Breast epithelium (tissue), 4 donors: ENCODE measurements at regions of chr15 and their contacts with region 1.

Region 1: DNA sequence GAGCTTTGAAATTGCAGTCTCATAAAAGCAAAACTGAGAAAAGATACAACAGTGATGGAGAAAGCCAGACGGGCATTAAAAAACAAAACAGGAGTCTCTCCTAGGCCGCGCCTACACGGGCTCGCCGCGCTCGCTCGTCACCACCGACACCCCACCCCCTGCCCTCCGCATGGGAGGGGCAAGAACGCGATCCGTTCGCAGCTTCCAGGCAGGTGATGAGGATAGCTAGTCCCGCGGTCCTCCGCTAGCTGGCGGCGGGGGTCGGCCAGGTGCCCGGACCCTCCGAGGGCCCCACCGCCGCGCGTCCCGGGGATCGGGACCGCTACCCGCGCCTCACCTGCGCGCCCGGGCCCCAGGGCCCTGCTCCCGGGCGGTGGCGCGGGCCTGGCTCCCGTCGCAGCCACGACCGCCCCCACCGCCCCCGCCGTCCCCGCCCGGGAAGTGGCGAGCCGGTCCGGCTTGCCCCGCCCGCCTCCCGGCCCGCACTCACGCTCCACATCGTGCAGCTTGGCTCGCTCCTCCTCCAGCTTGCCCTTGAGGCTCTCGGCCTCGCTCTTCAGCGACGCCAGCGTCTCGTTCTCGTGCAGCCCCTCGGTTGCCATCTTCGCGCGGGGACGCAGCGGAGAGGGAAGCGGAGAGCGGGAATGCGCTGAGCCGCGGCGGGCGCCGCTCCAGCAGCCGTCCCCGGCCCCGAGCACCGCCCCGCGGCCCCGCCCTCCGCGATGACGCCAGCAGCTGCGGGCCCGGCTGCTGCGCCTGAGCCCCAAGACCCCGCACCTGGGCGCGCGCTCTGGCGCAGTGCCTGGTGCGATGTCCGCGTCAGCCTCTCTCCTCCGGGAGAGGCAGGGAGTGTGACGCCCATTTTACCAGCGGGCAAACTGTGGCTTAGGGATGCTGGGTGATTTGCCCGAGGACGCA is 11.7 kb downstream of the GNB5 start:
- DNase-seq: peak; percentile 81 to 89
- H3K4me3 ChIP-seq: peak overlapping the region; percentile 75 to 96 (median 79)
- H3K27ac ChIP-seq: peak overlapping the region; percentile 97 to 100
- H3K4me1 ChIP-seq: peaks cover 3 to 5% of the 10 kb centered on the region in 2 donors
- H3K27me3 ChIP-seq: no peaks in the 10 kb centered on the region
- CTCF ChIP-seq: no peak
- POLR2A ChIP-seq: peak; percentile 54

Region 2: GRCh38 chr15:52246686-52247431 is 67.3 kb after region 1 on chr15:
- intact Hi-C with region 1: loop called (anchors 2 kb)
- DNase-seq: no peak
- H3K4me3 ChIP-seq: no peak overlapping the region
- H3K27ac ChIP-seq: no peak overlapping the region
- H3K4me1 ChIP-seq: no peaks in the 10 kb centered on the region
- H3K27me3 ChIP-seq: no peaks in the 10 kb centered on the region
- CTCF ChIP-seq: no peak
- POLR2A ChIP-seq: no peak